Activated CD8-positive, alpha-beta T cell treated with anti-CD3 and anti-CD28 coated beads, Interleukin-2, amount 10 ng/mL, durations not matched to agents 7 days and 5 days (primary cell): ENCODE measurements at regions of chr10 and their contacts with region 1.

Region 1: GRCh38 chr10:110007701-110008517 is at the start of gene ADD3:
- DNase-seq: peak; percentile 95
- ATAC-seq: peak; percentile 76
- H3K4me3 Mint-ChIP-seq: no peak within 1 kb of the TSS
- H3K27ac Mint-ChIP-seq: peak within 1 kb of the TSS; percentile 94
- H3K4me1 Mint-ChIP-seq: peaks cover 37% of the 10 kb centered on the region
- H3K27me3 Mint-ChIP-seq: no peaks in the 10 kb centered on the region
- total RNA-seq, gene ADD3: 172 to 200 TPM

Region 2: DNA sequence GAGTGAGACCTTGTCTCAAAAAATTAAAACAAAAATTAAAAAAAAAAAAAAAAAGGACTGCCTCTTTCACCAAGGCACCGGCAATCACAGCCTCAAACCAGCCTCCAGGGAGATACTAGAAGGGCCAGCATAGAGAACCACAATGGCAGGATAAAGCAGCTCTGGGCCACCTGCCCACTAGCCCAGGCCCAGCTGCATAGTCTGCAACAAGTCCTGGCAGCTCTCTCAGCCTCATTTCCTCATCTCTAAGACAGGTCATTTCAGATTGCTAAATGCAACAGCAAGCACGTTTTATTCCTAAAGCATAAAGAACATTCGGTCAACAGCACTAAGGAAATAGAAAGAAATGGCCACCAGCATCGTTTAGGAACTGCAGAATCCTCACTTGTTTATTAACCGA is 113.4 kb before region 1 on chr10:
- CTCF ChIA-PET with region 1: no interaction called
- POLR2A ChIA-PET with region 1: no interaction called
- DNase-seq: no peak
- ATAC-seq: no peak
- H3K4me3 Mint-ChIP-seq: no peak overlapping the region
- H3K27ac Mint-ChIP-seq: no peak overlapping the region
- H3K4me1 Mint-ChIP-seq: peaks cover 48% of the 10 kb centered on the region
- H3K27me3 Mint-ChIP-seq: no peaks in the 10 kb centered on the region

Region 3: GRCh38 chr10:109914966-109915365 is 92.9 kb before region 1 on chr10:
- CTCF ChIA-PET with region 1: interaction called, 3 read pairs
- POLR2A ChIA-PET with region 1: interaction called, 12 read pairs
- DNase-seq: peak; percentile 67
- ATAC-seq: peak; percentile 83
- H3K4me3 Mint-ChIP-seq: peak overlapping the region; percentile 58
- H3K27ac Mint-ChIP-seq: peak overlapping the region; percentile 85
- H3K4me1 Mint-ChIP-seq: peaks cover 91% of the 10 kb centered on the region
- H3K27me3 Mint-ChIP-seq: no peaks in the 10 kb centered on the region

Region 4: GRCh38 chr10:110029450-110029849 is 21.5 kb after region 1 on chr10:
- CTCF ChIA-PET with region 1: no interaction called
- POLR2A ChIA-PET with region 1: no interaction called
- DNase-seq: no peak
- ATAC-seq: no peak
- H3K4me3 Mint-ChIP-seq: no peak overlapping the region
- H3K27ac Mint-ChIP-seq: no peak overlapping the region
- H3K4me1 Mint-ChIP-seq: peaks cover 20% of the 10 kb centered on the region
- H3K27me3 Mint-ChIP-seq: no peaks in the 10 kb centered on the region

Region 5: GRCh38 chr10:110067960-110068770 is 60.3 kb after region 1 on chr10:
- CTCF ChIA-PET with region 1: interaction called, 7 read pairs
- POLR2A ChIA-PET with region 1: interaction called, 31 read pairs
- DNase-seq: peak; percentile 84
- ATAC-seq: peak; percentile 92
- H3K4me3 Mint-ChIP-seq: peak overlapping the region; percentile 64
- H3K27ac Mint-ChIP-seq: peak overlapping the region; percentile 92
- H3K4me1 Mint-ChIP-seq: peaks cover 88% of the 10 kb centered on the region
- H3K27me3 Mint-ChIP-seq: no peaks in the 10 kb centered on the region

Region 6: DNA sequence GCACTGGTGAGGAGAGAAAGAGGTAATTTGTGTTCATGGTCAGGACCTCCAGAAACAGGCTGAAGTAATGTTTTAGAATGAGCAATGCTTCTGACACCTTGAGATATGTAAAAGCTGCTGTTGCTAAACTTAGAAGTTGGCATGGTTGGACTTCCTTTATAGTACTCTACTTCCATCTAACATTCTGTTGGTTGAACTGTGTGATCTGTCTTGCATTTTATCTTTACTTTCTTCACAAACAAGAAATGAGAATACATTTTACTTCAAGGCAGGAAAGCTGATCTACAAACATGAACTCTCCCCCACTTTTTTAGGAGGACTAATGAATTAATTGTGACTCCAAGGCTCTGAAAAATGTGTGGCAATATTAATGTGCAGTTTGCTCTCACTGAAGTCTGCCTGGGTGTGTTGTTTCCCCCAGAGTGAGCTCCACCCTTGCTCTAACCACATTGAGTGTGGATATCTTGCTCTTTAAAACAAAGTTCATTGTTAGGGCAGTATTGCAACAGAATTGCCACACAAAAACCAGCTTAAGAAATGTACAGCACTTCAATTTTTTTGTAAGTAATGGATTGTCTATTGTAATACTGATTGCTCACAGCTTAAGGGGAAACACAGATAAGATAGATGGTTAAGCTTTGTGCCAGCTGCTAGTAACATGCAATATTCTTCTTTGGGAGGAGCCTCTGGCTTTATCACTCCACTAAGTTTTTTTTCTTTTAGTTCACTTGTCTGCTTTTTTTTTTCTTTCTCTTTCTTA is 68.8 kb after region 1 on chr10:
- CTCF ChIA-PET with region 1: interaction called, 4 read pairs
- POLR2A ChIA-PET with region 1: interaction called, 19 read pairs
- DNase-seq: peak; percentile 63
- ATAC-seq: peak; percentile 79
- H3K4me3 Mint-ChIP-seq: peak overlapping the region; percentile 84
- H3K27ac Mint-ChIP-seq: peak overlapping the region; percentile 96
- H3K4me1 Mint-ChIP-seq: peaks cover 83% of the 10 kb centered on the region
- H3K27me3 Mint-ChIP-seq: no peaks in the 10 kb centered on the region